Activated T-helper 1 cell treated with anti-CD3 and anti-CD28 coated beads, Interleukin-12 subunit alpha, Interleukin-12 subunit beta, Interleukin-2, Interleukin-4 antibody, amounts not matched to agents 30 ng/mL and 10 ng/mL and 1 ng/mL, durations not matched to agents 14 hours and 24 hours and 36 hours (primary cell): ENCODE measurements at regions of chr17 and their contacts with region 1.

Region 1: DNA sequence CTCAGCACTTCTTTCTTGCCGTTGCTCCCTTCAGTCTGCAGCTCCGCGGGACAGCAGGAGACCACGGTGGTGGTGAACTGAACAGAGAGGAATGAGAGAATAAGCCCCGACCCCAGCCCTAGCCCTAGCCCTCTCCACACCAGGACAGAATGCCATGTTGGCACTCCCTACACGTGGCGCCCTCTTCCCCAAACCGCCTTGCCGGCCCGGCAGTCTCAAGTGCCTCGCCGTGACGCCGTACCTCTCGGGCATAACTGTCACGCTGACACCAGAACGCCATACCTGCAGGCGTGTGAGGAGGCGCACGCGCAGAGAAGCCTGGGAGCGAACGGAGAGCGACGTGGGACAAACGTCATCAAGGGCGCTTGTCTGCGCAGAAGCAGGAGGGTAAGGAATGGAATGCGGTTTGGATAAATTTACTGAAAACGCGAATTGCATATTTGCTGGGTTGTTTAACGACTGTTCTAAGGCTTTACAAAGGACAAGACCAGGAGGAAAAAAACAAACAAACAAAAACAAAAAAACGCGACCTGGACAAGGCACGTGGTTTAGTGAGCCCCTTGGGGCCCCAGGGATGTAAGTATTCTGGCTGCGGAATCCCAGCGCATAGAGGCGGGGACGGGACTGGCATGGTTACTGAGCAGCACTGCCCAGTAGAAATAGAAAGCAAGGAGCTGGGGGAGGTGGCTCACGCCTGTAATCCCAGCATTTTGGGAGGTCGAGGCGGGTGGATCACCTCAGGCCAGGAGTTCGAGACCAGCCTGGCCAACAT is at the start of gene AARSD1:
- DNase-seq: peak; percentile 90
- H3K4me3 Mint-ChIP-seq: peak within 1 kb of the TSS; percentile 94
- H3K27ac Mint-ChIP-seq: peak within 1 kb of the TSS; percentile 90
- H3K4me1 Mint-ChIP-seq: peaks cover 13% of the 10 kb centered on the region
- H3K27me3 Mint-ChIP-seq: no peaks in the 10 kb centered on the region
- total RNA-seq, gene AARSD1: 78.2 and 85.5 TPM in 2 replicates

Region 2: DNA sequence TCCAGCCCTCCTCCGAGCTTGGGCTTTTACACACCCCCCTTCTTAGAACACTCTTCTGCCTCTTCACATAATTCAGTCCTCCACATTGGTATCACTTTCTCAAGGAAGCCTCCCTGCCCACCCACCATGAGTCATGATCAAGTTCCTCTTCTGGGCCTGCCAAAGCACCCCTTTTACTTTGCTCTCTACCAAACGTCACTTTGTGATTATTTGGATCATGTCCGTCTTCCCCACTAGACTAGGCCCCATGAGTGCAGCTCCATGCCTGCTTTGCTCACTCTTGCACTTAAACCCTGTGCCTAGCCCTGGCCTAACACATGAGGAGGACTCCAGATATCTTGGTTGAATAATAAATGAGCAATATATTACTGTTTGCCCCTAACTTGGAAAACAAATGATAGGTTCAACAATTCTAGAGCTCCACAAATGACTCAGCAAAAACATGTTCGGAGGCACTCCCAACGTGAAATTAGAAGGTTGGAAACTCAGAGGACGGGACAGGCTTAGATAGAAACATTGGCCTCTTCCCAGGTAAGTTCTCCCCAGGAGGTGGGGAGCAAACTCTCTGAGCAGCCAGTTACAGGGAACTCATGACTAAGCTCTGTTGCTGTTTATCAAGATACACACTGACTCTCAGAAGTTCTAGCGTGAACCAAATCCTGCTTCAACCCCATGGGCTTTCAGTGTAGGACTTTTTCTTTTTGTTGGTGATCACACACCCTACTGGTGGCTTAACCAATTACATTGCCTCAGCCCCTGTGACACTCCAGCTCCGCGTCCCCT is 35.4 kb before region 1 on chr17:
- intact Hi-C with region 1: loop called (anchors 2 kb)
- DNase-seq: no peak
- H3K4me3 Mint-ChIP-seq: no peak overlapping the region
- H3K27ac Mint-ChIP-seq: peak overlapping the region; percentile 47
- H3K4me1 Mint-ChIP-seq: peaks cover 11% of the 10 kb centered on the region
- H3K27me3 Mint-ChIP-seq: peaks cover 5% of the 10 kb centered on the region

Region 3: DNA sequence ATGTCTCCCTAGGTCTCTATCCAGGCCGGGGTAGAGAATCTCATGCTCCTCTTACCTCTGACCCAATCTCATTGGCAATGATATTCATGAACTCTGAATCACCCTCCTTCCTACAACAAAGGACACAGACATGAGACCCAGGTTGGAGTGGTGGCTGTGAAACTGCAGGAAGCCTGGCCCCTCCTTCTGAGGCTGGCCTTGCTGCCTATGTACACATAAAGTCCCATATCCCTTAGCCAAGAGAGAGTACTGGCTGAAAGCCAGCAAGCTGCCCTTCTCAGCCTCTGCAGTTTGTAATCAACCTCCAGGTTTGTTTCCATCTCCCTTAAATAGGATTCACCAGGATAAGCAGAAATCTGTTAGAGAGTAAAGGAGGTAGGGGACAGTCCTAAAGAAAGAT is 10.7 kb before region 1 on chr17:
- intact Hi-C with region 1: no loop called
- DNase-seq: no peak
- H3K4me3 Mint-ChIP-seq: no peak overlapping the region
- H3K27ac Mint-ChIP-seq: no peak overlapping the region
- H3K4me1 Mint-ChIP-seq: no peaks in the 10 kb centered on the region
- H3K27me3 Mint-ChIP-seq: no peaks in the 10 kb centered on the region

Region 4: DNA sequence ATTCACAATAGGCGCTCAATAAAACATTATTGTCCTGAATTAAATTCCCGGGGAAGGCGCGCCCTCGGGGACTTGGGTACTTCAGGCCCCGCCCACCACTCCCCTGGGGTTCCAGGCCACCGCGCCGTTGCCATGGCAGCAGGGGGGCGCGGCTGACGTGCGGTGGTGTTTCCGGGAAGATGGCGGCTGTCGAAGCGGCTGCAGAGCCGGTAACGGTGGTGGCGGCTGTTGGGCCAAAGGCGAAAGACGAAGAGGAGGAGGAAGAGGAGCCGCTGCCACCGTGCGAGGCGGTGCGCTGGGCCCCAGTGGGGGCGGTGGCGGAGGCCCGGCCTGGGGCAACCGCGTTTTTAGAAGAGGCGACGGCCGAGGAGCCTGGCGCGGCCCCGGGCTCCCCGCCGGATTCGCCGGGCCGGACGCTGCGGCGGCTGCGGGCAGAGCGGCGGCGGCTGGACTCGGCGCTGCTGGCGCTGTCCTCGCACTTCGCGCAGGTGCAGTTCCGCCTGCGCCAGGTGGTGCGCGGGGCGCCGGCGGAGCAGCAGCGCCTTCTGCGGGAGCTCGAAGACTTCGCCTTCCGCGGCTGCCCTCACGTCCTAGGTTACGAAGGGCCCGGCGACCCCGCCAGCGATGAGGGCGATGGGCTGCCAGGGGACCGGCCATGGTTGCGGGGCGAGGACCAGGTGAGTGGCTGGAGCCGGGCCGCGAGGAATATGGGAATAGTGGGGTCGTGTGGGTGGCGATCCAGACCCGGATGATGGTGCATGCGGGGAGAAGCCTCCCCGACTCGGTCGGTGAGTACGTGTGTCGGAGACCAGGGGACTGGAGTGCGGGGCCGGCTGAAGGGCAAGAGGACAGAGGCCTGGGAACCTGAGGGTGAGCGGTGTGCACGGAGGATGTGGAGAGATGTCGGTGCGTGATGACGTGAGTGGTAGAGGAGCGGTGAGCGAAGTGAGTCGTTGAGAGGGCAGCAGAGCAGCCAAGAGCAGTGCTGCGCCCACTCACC is 16.4 kb after region 1 on chr17 and contains the start of gene RUNDC1:
- intact Hi-C with region 1: loop called (anchors 1 kb)
- DNase-seq: peak; percentile 87
- H3K4me3 Mint-ChIP-seq: peak within 1 kb of the TSS; percentile 100
- H3K27ac Mint-ChIP-seq: peak within 1 kb of the TSS; percentile 99
- H3K4me1 Mint-ChIP-seq: peaks cover 42% of the 10 kb centered on the region
- H3K27me3 Mint-ChIP-seq: peaks cover 2% of the 10 kb centered on the region
- total RNA-seq, gene RUNDC1: 16.9 and 18.8 TPM in 2 replicates

Region 5: GRCh38 chr17:43006639-43007551 is 42.5 kb after region 1 on chr17 and contains the start of gene IFI35:
- intact Hi-C with region 1: loop called (anchors 2 kb)
- DNase-seq: peak; percentile 85
- H3K4me3 Mint-ChIP-seq: peak within 1 kb of the TSS; percentile 100
- H3K27ac Mint-ChIP-seq: peak within 1 kb of the TSS; percentile 99
- H3K4me1 Mint-ChIP-seq: peaks cover 21% of the 10 kb centered on the region
- H3K27me3 Mint-ChIP-seq: no peaks in the 10 kb centered on the region
- total RNA-seq, gene IFI35: 65.8 and 67.0 TPM in 2 replicates